ENCODE measurements at regions of chr20 and their contacts with region 1.

Region 1: GRCh38 chr20:10673988-10674711 is at the start of gene JAG1:
- DNase-seq: peak; percentile 78 to 91 (median 85)
- ATAC-seq: peak; percentile 90
- H3K4me3 ChIP-seq: peak within 1 kb of the TSS; percentile 54
- H3K27ac ChIP-seq: no peak within 1 kb of the TSS
- H3K4me1 ChIP-seq: peaks cover 0 to 35% of the 10 kb centered on the region in 2 experiments; a peak in 2 of 5 replicates
- H3K27me3 ChIP-seq: peaks cover 3 to 27% of the 10 kb centered on the region in 2 experiments
- CTCF ChIP-seq: no peak
- EP300 ChIP-seq: no peak
- POLR2A ChIP-seq: no peak
- RAD21 ChIP-seq: no peak
- polyA plus RNA-seq, gene JAG1: 0.04 TPM

Region 2: DNA sequence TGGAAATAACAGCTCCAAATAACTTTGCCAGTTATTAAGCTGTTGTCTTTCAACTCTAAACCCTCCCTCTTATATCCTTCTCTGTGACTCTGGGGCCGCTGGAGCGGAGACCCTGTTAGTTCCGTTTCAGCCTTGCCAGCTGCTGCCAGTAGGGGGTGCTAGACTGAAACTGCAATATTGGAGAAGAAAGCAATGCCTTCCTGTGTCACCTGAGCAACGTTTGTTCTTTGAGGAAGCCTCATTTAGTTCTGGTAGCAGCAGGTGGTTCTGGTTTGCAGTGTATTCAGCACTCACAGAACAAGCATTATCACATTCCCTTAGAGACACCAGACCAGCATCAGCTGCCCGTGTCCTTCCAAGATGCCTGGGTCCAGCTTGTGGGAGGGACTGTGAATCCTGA is 22.5 kb after region 1 on chr20:
- CTCF ChIA-PET with region 1: no interaction called
- POLR2A ChIA-PET with region 1: interaction called, 5 read pairs
- in situ Hi-C with region 1: no loop called
- intact Hi-C with region 1: loop called (anchors 2 kb)
- DNase-seq: peak; percentile 18 to 39 (median 36)
- ATAC-seq: no peak
- H3K4me3 ChIP-seq: no peak overlapping the region
- H3K27ac ChIP-seq: no peak overlapping the region
- H3K4me1 ChIP-seq: no peaks in the 10 kb centered on the region
- H3K27me3 ChIP-seq: no peaks in the 10 kb centered on the region
- CTCF ChIP-seq: peak; percentile 25 to 66 (median 56)
- EP300 ChIP-seq: no peak
- POLR2A ChIP-seq: no peak
- RAD21 ChIP-seq: peak; percentile 13 to 34; a peak in 1 of 4 replicates

Region 3: DNA sequence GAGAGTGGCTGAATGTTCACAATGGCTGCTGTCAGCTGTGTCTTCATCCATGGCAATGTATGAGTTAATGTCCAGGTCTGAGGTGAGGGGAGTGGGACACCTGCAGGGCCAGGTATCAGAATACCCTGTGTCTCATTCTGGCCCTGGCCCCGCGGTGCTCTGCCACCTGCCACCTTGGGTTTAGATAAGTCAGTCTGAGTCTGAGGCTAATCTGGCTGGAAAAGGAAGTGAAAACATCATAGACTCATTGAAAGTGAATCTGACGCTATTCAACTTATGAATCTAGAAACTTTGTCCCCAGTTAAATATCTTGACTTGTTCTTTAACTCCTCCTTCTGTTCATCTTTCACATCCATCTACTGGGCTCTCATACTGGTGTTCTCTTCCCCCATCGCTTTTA is 266.8 kb after region 1 on chr20:
- CTCF ChIA-PET with region 1: no interaction called
- POLR2A ChIA-PET with region 1: no interaction called
- in situ Hi-C with region 1: no loop called
- intact Hi-C with region 1: no loop called
- DNase-seq: no peak
- ATAC-seq: no peak
- H3K4me3 ChIP-seq: no peak overlapping the region
- H3K27ac ChIP-seq: no peak overlapping the region
- H3K4me1 ChIP-seq: no peaks in the 10 kb centered on the region
- H3K27me3 ChIP-seq: no peaks in the 10 kb centered on the region
- CTCF ChIP-seq: no peak
- EP300 ChIP-seq: no peak
- POLR2A ChIP-seq: no peak
- RAD21 ChIP-seq: no peak

Region 4: DNA sequence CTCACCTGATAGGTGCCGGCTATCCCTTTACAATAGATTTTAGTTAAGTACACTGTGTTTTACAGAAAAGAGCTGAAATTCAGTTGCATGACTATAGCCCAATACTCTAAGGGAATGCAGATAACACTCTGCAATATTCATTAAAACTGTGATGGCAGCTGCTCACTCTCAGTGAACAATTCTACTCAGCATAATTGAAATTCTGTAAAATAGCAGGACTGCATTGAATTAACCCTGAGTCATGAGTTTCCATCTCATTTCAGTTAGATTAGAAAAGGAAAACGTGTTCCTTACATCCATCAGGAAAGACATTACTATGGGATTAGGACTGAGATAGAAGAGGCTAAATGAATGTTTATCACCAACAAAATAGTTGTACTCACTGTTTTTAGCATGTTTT is 613.0 kb after region 1 on chr20:
- CTCF ChIA-PET with region 1: no interaction called
- POLR2A ChIA-PET with region 1: no interaction called
- in situ Hi-C with region 1: no loop called
- intact Hi-C with region 1: no loop called
- DNase-seq: no peak
- ATAC-seq: no peak
- H3K4me3 ChIP-seq: no peak overlapping the region
- H3K27ac ChIP-seq: no peak overlapping the region
- H3K4me1 ChIP-seq: no peaks in the 10 kb centered on the region
- H3K27me3 ChIP-seq: no peaks in the 10 kb centered on the region
- CTCF ChIP-seq: no peak
- EP300 ChIP-seq: no peak
- POLR2A ChIP-seq: no peak
- RAD21 ChIP-seq: no peak